Activated B cell treated with CpG ODN at 0.5 μM for 24 hours (primary cell): ENCODE measurements at regions of chr3 and their contacts with region 1.

Region 1: DNA sequence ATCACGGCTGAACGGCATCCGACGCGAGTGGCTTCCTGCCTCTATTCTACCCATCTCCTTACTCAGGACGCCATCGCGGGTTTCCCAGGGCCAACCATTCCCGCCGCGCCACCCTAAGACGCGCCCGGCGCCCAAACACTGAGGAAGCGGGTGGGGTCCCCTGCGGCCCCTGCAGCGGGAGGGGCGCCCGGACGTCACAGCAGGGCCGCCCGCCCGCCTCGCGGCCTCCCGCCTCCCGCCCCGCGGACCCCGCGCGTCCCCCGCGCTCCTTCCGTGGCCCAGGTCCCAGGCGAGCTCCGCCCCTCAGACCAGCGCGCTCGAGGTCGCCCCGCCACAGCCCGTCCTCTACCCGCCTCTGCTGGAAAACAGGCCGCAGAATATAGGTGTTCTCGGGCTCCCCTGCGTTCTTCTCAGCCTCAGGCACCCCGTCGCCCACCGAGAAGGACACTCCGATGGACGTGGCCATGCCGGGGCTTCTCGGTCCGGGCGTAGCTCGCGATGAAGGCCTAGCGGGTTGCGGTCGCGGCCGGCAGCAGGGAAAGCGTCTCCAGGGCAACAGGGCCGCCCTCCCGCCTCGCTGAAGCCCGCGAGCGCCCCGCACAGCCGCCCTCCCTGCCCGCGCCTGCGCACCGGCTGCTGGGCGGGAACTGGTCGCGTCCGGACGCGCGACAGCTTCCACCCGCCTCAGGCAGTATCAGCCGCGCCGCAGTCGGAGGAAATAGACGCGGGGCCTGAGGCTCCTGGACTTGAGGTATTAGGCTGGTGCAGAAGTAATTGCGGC is at the start of gene DYNLT2B:
- DNase-seq: peak; percentile 87
- ATAC-seq: peak; percentile 91
- H3K4me3 Mint-ChIP-seq: peak within 1 kb of the TSS; percentile 94
- H3K27ac Mint-ChIP-seq: peak within 1 kb of the TSS; percentile 97
- H3K4me1 Mint-ChIP-seq: peaks cover 2% of the 10 kb centered on the region
- H3K27me3 Mint-ChIP-seq: no peaks in the 10 kb centered on the region
- CTCF ChIP-seq: no peak
- total RNA-seq, gene DYNLT2B: 5.1 and 5.2 TPM in 2 replicates

Region 2: GRCh38 chr3:196274585-196274984 is 43.3 kb before region 1 on chr3:
- CTCF ChIA-PET with region 1: no interaction called
- POLR2A ChIA-PET with region 1: interaction called, 10 read pairs
- intact Hi-C with region 1: no loop called
- DNase-seq: no peak
- ATAC-seq: peak; percentile 80
- H3K4me3 Mint-ChIP-seq: peak overlapping the region; percentile 33
- H3K27ac Mint-ChIP-seq: peak overlapping the region; percentile 67
- H3K4me1 Mint-ChIP-seq: peaks cover 27% of the 10 kb centered on the region
- H3K27me3 Mint-ChIP-seq: no peaks in the 10 kb centered on the region
- CTCF ChIP-seq: no peak

Region 3: DNA sequence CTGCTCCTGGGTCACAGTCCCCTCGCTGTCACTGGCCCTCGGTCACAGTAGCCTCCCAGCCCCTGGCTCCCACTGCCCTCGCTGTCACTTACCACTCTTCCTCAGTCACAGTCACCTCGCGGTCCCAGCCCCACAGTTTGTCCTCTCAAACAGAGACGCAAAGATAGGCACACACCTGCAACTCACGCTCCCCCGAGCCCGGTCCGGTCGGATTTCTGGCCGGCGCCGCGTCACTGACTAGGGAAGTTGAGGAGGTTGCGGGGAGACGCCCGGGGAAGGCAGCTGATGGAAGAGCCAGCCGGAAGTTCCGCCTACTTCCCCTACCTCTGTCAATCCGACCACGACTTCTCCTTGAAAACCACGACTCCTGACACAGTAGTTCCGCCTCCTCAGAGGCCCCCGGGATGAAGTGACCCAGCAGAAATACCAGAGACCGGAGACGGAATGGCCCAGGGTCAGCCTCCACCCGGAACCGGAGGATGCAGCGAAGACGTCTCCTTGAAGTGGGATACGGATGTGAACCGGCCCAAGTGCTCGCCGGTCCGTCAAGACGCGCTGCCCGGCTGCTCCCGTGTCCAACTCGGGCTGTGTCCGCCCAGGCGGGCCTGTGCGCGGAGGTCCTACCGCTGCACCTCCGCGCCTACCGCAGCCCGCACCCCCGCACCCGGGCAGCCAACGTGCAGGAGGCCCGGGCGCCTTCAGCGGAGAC is 30.3 kb before region 1 on chr3 and contains the start of gene PCYT1A:
- CTCF ChIA-PET with region 1: no interaction called
- POLR2A ChIA-PET with region 1: interaction called, 16 read pairs
- intact Hi-C with region 1: loop called (anchors 1 kb)
- DNase-seq: peak; percentile 68
- ATAC-seq: peak; percentile 78
- H3K4me3 Mint-ChIP-seq: peak within 1 kb of the TSS; percentile 98
- H3K27ac Mint-ChIP-seq: peak within 1 kb of the TSS; percentile 97
- H3K4me1 Mint-ChIP-seq: peaks cover 66% of the 10 kb centered on the region
- H3K27me3 Mint-ChIP-seq: no peaks in the 10 kb centered on the region
- CTCF ChIP-seq: no peak
- total RNA-seq, gene PCYT1A: 54.6 and 58.8 TPM in 2 replicates

Region 4: DNA sequence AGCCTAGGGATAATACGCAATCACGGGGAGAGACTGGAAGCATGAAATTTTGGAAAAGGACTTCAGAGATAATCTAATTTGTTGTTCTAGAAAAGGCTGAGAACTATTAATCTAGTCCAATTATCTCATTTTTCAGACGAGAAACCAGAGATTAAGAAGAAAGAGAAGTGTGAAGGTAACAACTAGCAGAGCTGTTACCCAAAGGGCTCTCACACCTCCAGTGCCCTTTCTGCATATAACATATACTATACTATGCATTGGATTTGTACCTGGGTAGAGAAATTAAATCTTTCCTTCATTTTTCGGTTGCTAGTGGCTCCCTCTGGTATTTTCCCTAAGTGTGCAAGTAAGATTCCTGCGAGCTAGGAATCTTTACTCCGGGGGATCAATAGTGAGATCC is 33.7 kb after region 1 on chr3:
- CTCF ChIA-PET with region 1: no interaction called
- POLR2A ChIA-PET with region 1: no interaction called
- intact Hi-C with region 1: no loop called
- DNase-seq: no peak
- ATAC-seq: no peak
- H3K4me3 Mint-ChIP-seq: no peak overlapping the region
- H3K27ac Mint-ChIP-seq: no peak overlapping the region
- H3K4me1 Mint-ChIP-seq: no peaks in the 10 kb centered on the region
- H3K27me3 Mint-ChIP-seq: no peaks in the 10 kb centered on the region
- CTCF ChIP-seq: no peak

Region 5: DNA sequence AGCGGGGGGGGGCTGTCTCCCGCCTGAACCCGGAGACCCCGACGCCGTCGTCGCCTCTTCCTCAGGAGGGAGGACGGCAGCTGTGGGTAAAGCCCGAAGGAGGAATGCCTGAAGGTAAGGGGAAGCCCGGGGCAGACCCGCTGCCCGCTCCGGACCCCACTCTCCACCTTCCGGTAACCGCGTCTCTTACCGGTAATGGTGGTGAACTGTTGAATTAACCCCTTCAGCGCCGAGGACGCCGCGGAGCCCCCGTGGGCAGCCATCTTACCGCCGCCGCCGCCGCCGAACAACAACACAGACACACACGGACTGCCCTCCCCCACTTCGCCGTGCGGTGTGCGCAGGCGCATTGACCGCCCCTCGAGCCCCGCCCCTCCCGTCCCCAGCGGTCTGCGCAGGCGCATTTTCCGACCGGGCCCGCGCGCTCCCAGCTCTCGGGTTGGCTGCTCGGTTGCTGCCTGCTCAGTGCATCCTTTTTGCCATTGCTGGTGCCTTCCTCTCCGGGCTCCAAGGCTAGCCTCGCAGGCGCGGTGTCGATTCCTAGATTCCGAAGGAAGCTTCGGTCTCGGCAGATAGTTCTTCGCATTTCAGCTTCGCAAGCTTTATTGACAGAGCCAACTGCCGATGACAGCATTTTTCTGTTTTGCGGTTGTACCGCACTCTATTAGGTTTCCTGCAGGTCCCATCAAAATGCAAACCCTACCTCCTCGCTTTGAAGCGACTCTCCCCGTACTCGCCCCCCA is 114.4 kb after region 1 on chr3 and contains the start of gene UBXN7:
- CTCF ChIA-PET with region 1: no interaction called
- POLR2A ChIA-PET with region 1: interaction called, 10 read pairs
- intact Hi-C with region 1: loop called (anchors 2 kb)
- DNase-seq: peak; percentile 92
- ATAC-seq: peak; percentile 81
- H3K4me3 Mint-ChIP-seq: peak within 1 kb of the TSS; percentile 96
- H3K27ac Mint-ChIP-seq: peak within 1 kb of the TSS; percentile 80
- H3K4me1 Mint-ChIP-seq: peaks cover 22% of the 10 kb centered on the region
- H3K27me3 Mint-ChIP-seq: no peaks in the 10 kb centered on the region
- CTCF ChIP-seq: no peak
- total RNA-seq, gene UBXN7: 60.8 and 66.5 TPM in 2 replicates

Region 6: DNA sequence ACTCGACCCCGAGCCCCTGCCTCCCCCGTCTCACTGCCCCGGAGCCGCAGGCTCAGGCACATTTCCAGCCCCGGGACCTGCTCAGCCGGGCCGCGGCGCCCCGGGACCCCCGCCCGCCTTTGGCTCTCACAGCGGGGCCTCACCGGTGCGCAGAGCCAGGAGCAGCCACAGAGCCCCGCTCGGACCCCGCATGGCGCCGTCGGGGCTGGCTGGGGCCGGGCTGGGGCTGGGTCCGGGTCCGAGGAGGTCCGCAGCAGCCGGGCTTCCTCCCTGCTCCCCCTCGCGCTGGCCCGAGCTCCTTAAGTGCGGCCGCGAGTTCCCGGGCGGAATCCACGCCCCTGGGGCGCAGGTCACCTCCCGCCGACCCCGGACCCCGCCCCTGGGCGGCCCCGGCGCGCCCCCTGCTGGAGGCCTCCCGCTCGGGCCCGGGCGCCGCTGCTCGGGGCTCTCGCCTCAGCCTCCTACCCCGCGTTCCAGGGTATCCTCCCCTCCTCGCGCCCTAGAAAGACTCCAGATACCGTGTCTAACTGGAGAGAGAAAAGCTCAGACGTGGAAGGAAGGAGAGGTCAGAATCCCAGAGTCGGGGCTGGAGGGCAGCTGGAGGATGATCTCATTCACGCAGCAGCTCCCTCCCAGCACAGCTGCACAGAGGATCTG is 711.8 kb after region 1 on chr3 and contains the start of gene MELTF:
- CTCF ChIA-PET with region 1: no interaction called
- POLR2A ChIA-PET with region 1: no interaction called
- intact Hi-C with region 1: no loop called
- DNase-seq: peak; percentile 83
- ATAC-seq: peak; percentile 73
- H3K4me3 Mint-ChIP-seq: peak within 1 kb of the TSS; percentile 82
- H3K27ac Mint-ChIP-seq: peak within 1 kb of the TSS; percentile 56
- H3K4me1 Mint-ChIP-seq: peaks cover 23% of the 10 kb centered on the region
- H3K27me3 Mint-ChIP-seq: peaks cover 24% of the 10 kb centered on the region
- CTCF ChIP-seq: peak; percentile 93
- total RNA-seq, gene MELTF: 50.0 and 61.5 TPM in 2 replicates

Region 7: DNA sequence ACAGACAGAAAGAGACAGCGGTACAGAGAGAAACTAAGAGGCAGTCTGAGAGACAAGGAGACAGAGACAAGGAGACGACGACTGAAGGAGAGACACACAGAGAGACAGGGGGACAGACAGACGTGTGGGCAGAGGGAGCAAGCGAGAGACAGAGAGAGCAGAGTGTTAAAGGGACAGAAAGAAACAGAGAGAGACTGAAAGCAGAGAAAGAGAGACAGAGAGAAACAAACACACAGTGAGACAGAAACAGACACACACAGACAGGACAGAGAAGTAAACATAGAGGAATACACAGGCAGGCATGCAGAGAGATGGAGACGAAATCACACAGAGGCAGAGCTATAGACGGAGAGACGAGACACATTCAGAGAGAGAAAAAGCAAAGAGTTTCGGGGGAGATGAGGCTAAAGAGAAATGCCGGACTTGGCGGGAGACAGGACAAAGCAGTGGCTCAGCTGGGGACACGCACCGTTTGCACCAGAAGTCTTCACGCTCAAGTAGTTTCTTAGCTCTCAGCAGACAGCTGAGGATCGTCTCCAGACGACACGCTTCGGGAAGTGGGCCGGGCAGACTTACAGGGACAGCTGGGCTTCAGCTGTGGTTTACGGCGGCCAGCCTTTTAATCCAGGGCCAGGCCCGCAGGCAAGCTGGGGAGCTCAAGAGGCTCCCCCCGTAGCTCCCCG is 1036.6 kb after region 1 on chr3:
- CTCF ChIA-PET with region 1: no interaction called
- POLR2A ChIA-PET with region 1: no interaction called
- intact Hi-C with region 1: no loop called
- DNase-seq: no peak
- ATAC-seq: no peak
- H3K4me3 Mint-ChIP-seq: no peak overlapping the region
- H3K27ac Mint-ChIP-seq: no peak overlapping the region
- H3K4me1 Mint-ChIP-seq: no peaks in the 10 kb centered on the region
- H3K27me3 Mint-ChIP-seq: peaks cover 21% of the 10 kb centered on the region
- CTCF ChIP-seq: no peak